Activated CD4-positive, alpha-beta memory T cell treated with anti-CD3 and anti-CD28 coated beads, Interleukin-2, amount 10 ng/mL, durations not matched to agents 7 days and 5 days (primary cell): ENCODE measurements at regions of chr19 and their contacts with region 1.

Region 1: GRCh38 chr19:47348819-47349795 is at the start of gene DHX34:
- DNase-seq: peak; percentile 99
- H3K4me3 Mint-ChIP-seq: peak within 1 kb of the TSS; percentile 98
- H3K27ac Mint-ChIP-seq: peak within 1 kb of the TSS; percentile 77
- H3K4me1 Mint-ChIP-seq: peaks cover 31% of the 10 kb centered on the region
- H3K27me3 Mint-ChIP-seq: no peaks in the 10 kb centered on the region
- total RNA-seq, gene DHX34: 10.3 to 10.5 TPM

Region 2: DNA sequence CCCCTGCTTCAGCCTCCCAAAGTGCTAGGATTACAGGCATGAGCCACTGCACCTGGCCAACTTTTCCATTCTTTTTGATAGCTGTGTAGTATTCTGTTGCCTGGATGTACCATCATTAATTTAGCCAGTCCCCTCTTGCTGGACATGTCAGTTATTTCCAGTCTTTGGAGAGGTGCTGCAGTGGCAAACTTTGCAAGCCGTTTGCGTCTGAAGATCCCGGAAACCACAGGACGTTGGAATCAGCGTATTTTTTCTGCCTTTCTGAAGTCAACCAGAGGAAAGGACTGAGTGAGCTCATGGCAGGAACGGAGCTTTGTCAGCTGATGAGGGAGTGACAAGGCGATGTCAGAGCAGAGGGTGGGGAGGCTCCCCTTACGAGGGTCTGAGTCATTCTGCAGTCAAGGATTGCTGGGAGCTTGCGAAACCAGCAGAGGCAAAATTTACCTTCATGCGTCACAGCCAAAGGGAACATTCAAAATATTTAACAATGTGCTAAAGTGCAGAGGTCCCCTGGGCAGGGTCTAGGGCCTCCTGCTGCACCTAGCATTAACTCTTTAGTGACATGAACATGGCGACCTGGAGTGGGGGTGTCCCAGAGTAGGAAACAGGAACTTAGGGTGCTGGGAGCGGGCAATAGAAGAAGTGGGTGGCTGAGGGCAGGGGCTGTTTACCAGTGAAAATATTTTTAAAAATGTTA is 33.8 kb before region 1 on chr19:
- CTCF ChIA-PET with region 1: interaction called, 11 read pairs
- POLR2A ChIA-PET with region 1: no interaction called
- DNase-seq: peak; percentile 26
- H3K4me3 Mint-ChIP-seq: no peak overlapping the region
- H3K27ac Mint-ChIP-seq: no peak overlapping the region
- H3K4me1 Mint-ChIP-seq: peaks cover 8% of the 10 kb centered on the region
- H3K27me3 Mint-ChIP-seq: peaks cover 18% of the 10 kb centered on the region

Region 3: GRCh38 chr19:47336853-47337279 is 12.2 kb before region 1 on chr19:
- CTCF ChIA-PET with region 1: interaction called, 75 read pairs
- POLR2A ChIA-PET with region 1: interaction called, 52 read pairs
- DNase-seq: peak; percentile 63
- H3K4me3 Mint-ChIP-seq: peak overlapping the region; percentile 49
- H3K27ac Mint-ChIP-seq: peak overlapping the region; percentile 91
- H3K4me1 Mint-ChIP-seq: peaks cover 26% of the 10 kb centered on the region
- H3K27me3 Mint-ChIP-seq: peaks cover 5% of the 10 kb centered on the region

Region 4: DNA sequence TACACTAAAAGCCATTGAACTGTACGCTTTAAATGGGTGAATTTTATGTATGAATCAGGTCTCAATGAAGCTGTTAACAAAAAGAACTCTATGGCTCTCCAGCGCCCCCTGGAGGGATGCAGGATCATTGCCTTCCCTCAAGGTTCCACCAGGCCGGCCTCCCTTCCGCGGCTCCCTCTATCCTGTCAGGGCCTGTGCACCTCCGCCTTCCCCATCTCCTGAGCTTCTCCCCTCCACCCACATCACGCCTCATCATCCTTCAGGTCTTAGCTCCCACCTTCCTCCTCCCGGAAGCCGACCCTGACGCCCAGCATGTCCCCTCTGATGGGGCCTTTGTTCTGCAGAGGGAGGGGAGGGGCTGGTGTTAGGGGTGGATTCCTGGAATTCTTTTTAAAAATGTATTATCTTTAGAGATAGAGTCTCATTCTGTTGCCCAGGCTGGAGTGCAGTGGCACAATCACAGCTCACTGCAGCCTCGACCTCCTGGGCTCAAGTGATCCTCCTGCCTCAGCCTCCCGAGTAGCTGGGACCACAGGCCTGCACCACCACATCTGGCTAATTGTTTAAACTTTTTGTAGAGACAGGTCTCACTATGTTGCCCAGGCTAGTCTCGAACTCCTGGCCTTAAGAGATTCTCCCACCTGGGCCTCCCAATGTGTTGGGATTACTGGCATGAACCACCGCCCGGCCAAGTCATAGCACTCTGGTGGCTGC is 42.6 kb after region 1 on chr19:
- CTCF ChIA-PET with region 1: interaction called, 33 read pairs
- POLR2A ChIA-PET with region 1: no interaction called
- DNase-seq: peak; percentile 86
- H3K4me3 Mint-ChIP-seq: no peak overlapping the region
- H3K27ac Mint-ChIP-seq: no peak overlapping the region
- H3K4me1 Mint-ChIP-seq: peaks cover 6% of the 10 kb centered on the region
- H3K27me3 Mint-ChIP-seq: peaks cover 6% of the 10 kb centered on the region

Region 5: GRCh38 chr19:47436712-47437401 is 87.8 kb after region 1 on chr19:
- CTCF ChIA-PET with region 1: interaction called, 10 read pairs
- POLR2A ChIA-PET with region 1: interaction called, 3 read pairs
- DNase-seq: peak; percentile 87
- H3K4me3 Mint-ChIP-seq: peak overlapping the region; percentile 13
- H3K27ac Mint-ChIP-seq: no peak overlapping the region
- H3K4me1 Mint-ChIP-seq: peaks cover 51% of the 10 kb centered on the region
- H3K27me3 Mint-ChIP-seq: peaks cover 29% of the 10 kb centered on the region